Activated naive CD4-positive, alpha-beta T cell treated with anti-CD3 and anti-CD28 coated beads for 36 hours (primary cell): ENCODE measurements at regions of chr18 and their contacts with region 1.

Region 1: GRCh38 chr18:21071071-21071470 is 40.5 kb downstream of the ROCK1 start:
- DNase-seq: no peak
- H3K4me3 Mint-ChIP-seq: no peak overlapping the region
- H3K27ac Mint-ChIP-seq: no peak overlapping the region
- H3K4me1 Mint-ChIP-seq: peaks cover 46% of the 10 kb centered on the region
- H3K27me3 Mint-ChIP-seq: no peaks in the 10 kb centered on the region

Region 2: GRCh38 chr18:21054252-21054821 is 16.7 kb before region 1 on chr18:
- CTCF ChIA-PET with region 1: no interaction called
- intact Hi-C with region 1: no loop called
- DNase-seq: no peak
- H3K4me3 Mint-ChIP-seq: no peak overlapping the region
- H3K27ac Mint-ChIP-seq: no peak overlapping the region
- H3K4me1 Mint-ChIP-seq: peaks cover 34% of the 10 kb centered on the region
- H3K27me3 Mint-ChIP-seq: no peaks in the 10 kb centered on the region

Region 3: GRCh38 chr18:21099442-21099841 is 28.4 kb after region 1 on chr18:
- CTCF ChIA-PET with region 1: interaction called, 3 read pairs
- intact Hi-C with region 1: loop called (anchors 2 kb)
- DNase-seq: no peak
- H3K4me3 Mint-ChIP-seq: no peak overlapping the region
- H3K27ac Mint-ChIP-seq: no peak overlapping the region
- H3K4me1 Mint-ChIP-seq: peaks cover 70% of the 10 kb centered on the region
- H3K27me3 Mint-ChIP-seq: no peaks in the 10 kb centered on the region